Activated CD8-positive, alpha-beta T cell treated with anti-CD3 and anti-CD28 coated beads, Interleukin-2, amount 10 ng/mL, durations not matched to agents 7 days and 5 days (primary cell): ENCODE measurements at regions of chr9 and their contacts with region 1.

Region 1: DNA sequence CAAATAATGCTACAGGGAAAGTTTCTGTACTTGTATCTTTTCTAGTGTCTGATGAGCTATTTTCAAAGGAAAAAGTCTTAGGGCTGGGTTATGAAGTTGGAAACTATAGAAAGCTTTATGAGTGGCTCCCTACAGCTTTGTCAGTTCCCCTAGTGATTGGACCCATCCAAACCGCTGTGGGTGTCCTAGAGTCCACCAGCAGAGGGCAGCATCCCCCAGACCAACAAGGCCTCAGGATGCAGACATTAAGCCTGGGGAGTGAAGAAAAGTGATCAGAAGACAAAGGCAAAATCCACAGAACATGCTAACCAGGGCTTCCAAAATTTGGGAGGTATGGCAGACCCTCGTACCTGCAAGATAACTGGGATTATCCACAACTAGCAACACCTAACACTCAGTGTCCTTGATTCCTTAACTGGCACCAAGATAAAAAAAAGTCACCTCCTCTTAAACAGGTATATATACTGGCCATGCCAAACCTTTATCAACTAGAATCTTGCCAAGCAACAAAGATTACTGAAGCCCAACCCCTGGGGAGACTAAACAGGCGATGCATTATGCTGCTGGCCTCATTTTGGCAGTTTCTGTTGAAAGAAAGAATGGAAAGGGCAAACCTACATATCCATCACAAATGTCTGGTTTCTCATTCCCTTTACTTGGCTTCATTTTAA is 110.4 kb upstream of the NR5A1 start:
- DNase-seq: peak; percentile 83
- ATAC-seq: peak; percentile 89
- H3K4me3 Mint-ChIP-seq: no peak overlapping the region
- H3K27ac Mint-ChIP-seq: no peak overlapping the region
- H3K4me1 Mint-ChIP-seq: no peaks in the 10 kb centered on the region
- H3K27me3 Mint-ChIP-seq: peaks cover 11% of the 10 kb centered on the region

Region 2: DNA sequence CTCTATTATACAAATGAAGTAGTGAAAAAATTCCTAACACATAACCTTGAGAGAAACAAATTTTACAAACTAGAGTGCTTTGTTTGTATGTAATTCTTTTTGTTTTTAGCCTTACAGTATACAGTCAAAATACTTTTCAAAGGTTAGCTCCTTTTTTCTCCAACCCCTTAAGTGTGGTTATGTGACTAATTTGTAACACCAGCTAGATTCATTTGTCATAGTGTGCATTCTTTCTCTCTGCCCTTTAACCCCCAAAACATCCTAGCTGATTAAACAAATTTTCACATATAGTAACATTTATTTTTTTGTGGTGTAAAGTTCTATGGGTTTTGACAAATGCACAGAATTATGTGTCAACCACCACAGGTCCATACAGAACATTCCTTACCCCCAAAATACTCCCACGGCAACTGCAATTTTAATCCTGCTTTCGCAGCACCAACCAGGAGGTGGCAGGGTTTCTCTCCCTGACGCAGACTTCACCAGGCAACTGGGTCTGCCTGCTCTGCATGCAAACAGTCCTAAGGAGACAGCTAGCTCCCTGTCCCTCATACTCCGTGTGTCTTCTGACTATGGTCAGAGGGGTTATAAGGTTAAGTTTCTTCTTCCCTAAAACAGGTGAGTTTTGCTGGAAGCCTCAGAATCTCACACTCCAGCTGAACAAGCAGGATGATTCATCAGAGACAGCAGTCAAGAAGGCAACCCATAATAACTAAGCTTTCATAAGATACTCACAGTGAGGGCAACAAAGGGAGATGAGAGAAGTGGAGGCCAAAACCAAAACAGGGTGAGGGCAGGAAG is 65.9 kb before region 1 on chr9:
- CTCF ChIA-PET with region 1: interaction called, 22 read pairs
- POLR2A ChIA-PET with region 1: no interaction called
- DNase-seq: peak; percentile 47
- ATAC-seq: peak; percentile 78
- H3K4me3 Mint-ChIP-seq: no peak overlapping the region
- H3K27ac Mint-ChIP-seq: no peak overlapping the region
- H3K4me1 Mint-ChIP-seq: peaks cover 8% of the 10 kb centered on the region
- H3K27me3 Mint-ChIP-seq: peaks cover 6% of the 10 kb centered on the region

Region 3: DNA sequence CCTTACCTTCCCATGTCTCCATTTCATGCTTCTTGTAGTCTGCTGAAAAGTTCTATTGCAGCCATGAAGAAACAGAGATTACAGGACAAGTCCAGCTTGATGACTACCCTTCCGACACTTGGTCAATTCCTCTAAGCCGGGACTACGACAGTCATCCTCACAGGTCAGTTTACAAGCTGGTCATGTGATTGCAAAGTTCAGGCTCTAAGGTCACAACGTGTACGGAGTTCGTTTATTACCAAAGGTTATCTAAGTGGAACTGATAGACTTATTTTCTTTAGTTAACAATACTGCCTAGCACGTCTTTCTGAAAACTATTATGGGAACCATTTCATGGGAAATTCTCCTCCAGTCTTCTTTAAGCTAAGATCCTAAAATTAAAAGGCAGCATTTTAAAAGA is 21.9 kb before region 1 on chr9:
- CTCF ChIA-PET with region 1: interaction called, 12 read pairs
- POLR2A ChIA-PET with region 1: no interaction called
- DNase-seq: no peak
- ATAC-seq: no peak
- H3K4me3 Mint-ChIP-seq: no peak overlapping the region
- H3K27ac Mint-ChIP-seq: no peak overlapping the region
- H3K4me1 Mint-ChIP-seq: no peaks in the 10 kb centered on the region
- H3K27me3 Mint-ChIP-seq: peaks cover 33% of the 10 kb centered on the region

Region 4: DNA sequence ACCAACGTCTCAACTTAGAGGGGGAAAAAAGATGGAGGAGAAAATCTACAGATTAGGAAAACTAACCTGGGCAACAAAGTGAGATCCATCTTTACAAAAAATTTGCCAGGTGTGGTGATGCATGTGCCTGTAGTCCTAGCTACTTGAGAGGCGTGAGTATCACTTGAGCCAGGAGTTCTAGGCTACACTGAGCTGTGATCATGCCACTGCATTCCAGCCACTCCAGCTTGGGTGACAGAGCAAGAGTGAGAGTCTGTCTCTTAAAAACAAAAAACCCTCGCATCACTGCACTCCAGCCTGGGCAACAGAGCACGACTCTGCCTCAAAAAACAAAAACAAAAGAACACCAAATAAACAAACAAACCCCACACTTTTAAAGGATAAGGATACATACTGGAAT is 12.3 kb before region 1 on chr9:
- CTCF ChIA-PET with region 1: interaction called, 11 read pairs
- POLR2A ChIA-PET with region 1: no interaction called
- DNase-seq: no peak
- ATAC-seq: no peak
- H3K4me3 Mint-ChIP-seq: no peak overlapping the region
- H3K27ac Mint-ChIP-seq: no peak overlapping the region
- H3K4me1 Mint-ChIP-seq: no peaks in the 10 kb centered on the region
- H3K27me3 Mint-ChIP-seq: peaks cover 18% of the 10 kb centered on the region

Region 5: GRCh38 chr9:124632077-124632621 is 14.5 kb after region 1 on chr9:
- CTCF ChIA-PET with region 1: interaction called, 11 read pairs
- POLR2A ChIA-PET with region 1: no interaction called
- DNase-seq: no peak
- ATAC-seq: no peak
- H3K4me3 Mint-ChIP-seq: no peak overlapping the region
- H3K27ac Mint-ChIP-seq: no peak overlapping the region
- H3K4me1 Mint-ChIP-seq: no peaks in the 10 kb centered on the region
- H3K27me3 Mint-ChIP-seq: peaks cover 30% of the 10 kb centered on the region

Region 6: GRCh38 chr9:124652203-124652992 is 34.8 kb after region 1 on chr9:
- CTCF ChIA-PET with region 1: interaction called, 19 read pairs
- POLR2A ChIA-PET with region 1: no interaction called
- DNase-seq: no peak
- ATAC-seq: no peak
- H3K4me3 Mint-ChIP-seq: no peak overlapping the region
- H3K27ac Mint-ChIP-seq: no peak overlapping the region
- H3K4me1 Mint-ChIP-seq: no peaks in the 10 kb centered on the region
- H3K27me3 Mint-ChIP-seq: peaks cover 18% of the 10 kb centered on the region

Region 7: GRCh38 chr9:124708633-124709291 is 91.2 kb after region 1 on chr9:
- CTCF ChIA-PET with region 1: interaction called, 95 read pairs
- POLR2A ChIA-PET with region 1: no interaction called
- DNase-seq: no peak
- ATAC-seq: no peak
- H3K4me3 Mint-ChIP-seq: no peak overlapping the region
- H3K27ac Mint-ChIP-seq: no peak overlapping the region
- H3K4me1 Mint-ChIP-seq: no peaks in the 10 kb centered on the region
- H3K27me3 Mint-ChIP-seq: peaks cover 16% of the 10 kb centered on the region

Region 8: DNA sequence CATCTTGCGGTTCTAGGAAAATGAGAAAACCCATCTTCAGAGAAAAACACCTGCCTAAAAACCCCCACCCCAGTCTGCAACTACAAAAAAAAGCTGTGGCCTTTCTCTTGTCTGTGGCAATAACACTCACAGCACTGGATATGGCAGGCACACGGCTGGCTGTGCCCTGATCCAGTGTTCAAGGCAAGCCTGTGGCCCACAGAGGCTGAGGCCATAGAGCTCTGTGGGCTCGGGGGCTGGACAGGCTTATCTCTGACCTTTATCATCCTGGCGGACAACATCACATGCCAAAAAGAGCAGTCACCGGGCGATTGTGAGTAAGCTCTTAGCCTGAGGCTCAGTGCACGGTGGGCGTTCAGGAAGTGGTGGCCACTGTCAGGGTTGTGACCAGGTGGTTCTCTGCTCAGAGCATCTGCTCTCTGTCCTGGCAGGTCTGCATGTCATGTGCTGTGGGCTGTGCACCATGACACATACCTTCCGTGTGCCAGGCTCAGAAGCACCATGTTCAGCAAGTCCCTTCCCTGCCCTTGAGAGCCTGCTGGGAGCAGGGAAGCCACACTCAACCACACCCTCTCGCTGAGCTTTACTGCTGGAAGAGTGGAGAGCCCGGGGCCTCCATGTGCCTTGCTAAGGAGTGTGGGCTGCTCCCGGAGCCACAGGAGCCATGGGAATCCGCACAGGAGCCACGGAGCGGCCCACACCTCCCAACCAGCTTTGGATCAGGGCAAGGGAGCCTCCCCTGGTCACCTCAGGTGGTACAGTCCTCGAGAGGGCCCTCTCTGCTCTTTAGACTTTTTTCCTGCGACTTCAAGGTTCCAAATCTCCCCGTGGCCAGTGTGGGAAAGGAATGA is 201.1 kb after region 1 on chr9:
- CTCF ChIA-PET with region 1: no interaction called
- POLR2A ChIA-PET with region 1: no interaction called
- DNase-seq: peak; percentile 39
- ATAC-seq: peak; percentile 72
- H3K4me3 Mint-ChIP-seq: no peak overlapping the region
- H3K27ac Mint-ChIP-seq: no peak overlapping the region
- H3K4me1 Mint-ChIP-seq: peaks cover 19% of the 10 kb centered on the region
- H3K27me3 Mint-ChIP-seq: peaks cover 4% of the 10 kb centered on the region